Natural killer cell (primary cell): ENCODE measurements at regions of chr12 and their contacts with region 1.

Region 1: DNA sequence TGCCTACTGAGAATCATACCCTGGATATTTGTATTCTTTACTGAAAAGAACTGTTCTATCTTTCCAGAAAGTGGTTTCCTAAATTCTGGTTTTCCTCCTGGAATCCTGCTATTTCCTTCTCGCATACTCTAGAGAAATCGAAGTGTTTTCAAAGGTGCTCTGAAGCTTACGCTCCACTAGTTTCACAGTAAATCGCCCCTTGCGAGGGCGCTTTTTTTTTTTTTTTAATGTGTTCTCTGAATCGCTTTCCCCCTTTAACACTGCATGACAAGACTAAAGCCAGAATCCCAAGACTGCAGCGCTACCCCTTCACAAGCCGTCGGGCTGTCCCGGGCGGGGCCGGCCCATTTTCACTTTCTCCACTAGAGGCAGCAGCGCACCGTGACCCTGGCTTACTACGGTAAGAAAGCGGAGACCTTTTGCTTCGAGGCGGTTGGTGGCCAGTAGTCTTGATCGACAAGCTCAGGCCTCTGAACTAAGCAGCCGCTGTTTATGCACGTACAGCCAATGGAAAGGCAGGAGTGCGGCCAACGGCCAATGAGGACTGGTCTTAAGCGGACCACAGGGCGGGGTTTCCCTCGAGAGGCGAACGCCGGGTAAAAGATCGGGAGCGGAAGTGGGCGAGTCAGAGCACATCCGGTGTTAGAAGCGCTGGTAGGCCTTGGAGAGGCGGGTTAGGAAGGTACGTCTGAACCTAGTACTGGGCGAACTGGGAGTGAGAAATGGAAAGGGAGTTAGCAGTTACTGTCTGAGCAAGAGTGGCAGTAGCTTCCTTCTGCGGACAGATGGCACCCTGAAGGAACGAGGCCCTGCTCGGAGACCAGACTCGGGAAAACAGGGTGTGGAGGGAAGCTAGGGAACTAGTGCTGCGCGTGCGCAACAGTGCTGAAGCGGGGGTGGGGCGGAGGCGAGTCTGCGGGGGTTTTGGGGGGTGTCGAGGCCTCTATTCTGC is at the start of gene TMBIM6:
- DNase-seq: peak; percentile 97 to 100
- ATAC-seq: peak; percentile 82 to 95 (median 85)
- H3K4me3 ChIP-seq: peak within 1 kb of the TSS; percentile 57
- H3K4me3 Mint-ChIP-seq: peak within 1 kb of the TSS; percentile 96
- H3K27ac ChIP-seq: peak within 1 kb of the TSS; percentile 89
- H3K27ac Mint-ChIP-seq: peak within 1 kb of the TSS; percentile 98 to 100
- H3K4me1 ChIP-seq: peaks cover 27% of the 10 kb centered on the region
- H3K4me1 Mint-ChIP-seq: peaks cover 42 to 44% of the 10 kb centered on the region in 2 donors
- H3K27me3 ChIP-seq: no peaks in the 10 kb centered on the region
- H3K27me3 Mint-ChIP-seq: peaks cover 0 to 5% of the 10 kb centered on the region in 2 donors
- CTCF ChIP-seq: peak; percentile 87
- total RNA-seq, gene TMBIM6: 326 to 375 (median 366) TPM

Region 2: DNA sequence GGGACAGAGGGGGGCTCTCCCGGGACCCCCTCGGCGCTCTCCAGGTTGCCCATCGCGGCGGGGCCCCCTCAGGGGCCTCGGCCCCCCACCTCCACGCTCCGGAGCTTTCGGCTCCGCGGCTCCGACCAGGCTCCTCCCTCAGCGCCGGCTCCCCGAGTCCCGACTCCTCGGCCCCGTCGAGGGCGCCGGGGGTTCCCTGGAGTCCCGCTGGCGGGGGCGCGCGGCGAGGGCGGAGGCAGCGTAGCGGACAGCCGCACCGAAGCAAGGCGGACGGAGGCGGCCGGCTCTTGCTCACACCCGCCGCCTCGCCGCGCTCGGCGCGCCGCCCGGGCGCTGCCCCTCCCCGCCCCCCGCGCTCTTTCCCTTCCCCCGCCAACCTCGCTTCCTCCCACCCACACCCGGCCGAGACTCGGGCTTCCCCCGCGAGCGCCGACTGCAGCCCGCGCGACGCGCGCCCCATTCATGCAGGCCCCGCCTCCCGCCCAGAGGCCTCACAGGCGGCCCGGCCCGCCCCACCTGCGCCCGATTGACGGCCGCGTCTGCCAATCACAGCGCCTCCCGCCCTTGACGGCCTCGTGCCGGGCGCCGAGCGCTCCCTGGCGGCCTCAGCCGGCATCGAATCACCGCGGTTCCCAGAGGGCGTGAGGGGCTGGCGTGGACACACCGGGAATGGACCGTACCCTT is 33.9 kb before region 1 on chr12 and contains the start of gene FMNL3:
- intact Hi-C with region 1: loop called (anchors 1 kb)
- DNase-seq: peak; percentile 99
- ATAC-seq: peak; percentile 87 to 98 (median 91)
- H3K4me3 ChIP-seq: peak within 1 kb of the TSS; percentile 85
- H3K4me3 Mint-ChIP-seq: peak within 1 kb of the TSS; percentile 93
- H3K27ac ChIP-seq: peak within 1 kb of the TSS; percentile 90
- H3K27ac Mint-ChIP-seq: peak within 1 kb of the TSS; percentile 84 to 86
- H3K4me1 ChIP-seq: peaks cover 42% of the 10 kb centered on the region
- H3K4me1 Mint-ChIP-seq: peaks cover 42 to 47% of the 10 kb centered on the region in 2 donors
- H3K27me3 ChIP-seq: no peaks in the 10 kb centered on the region
- H3K27me3 Mint-ChIP-seq: peaks cover 5 to 21% of the 10 kb centered on the region in 2 donors
- CTCF ChIP-seq: peak; percentile 97
- total RNA-seq, gene FMNL3: 54.2 to 82.6 (median 58.7) TPM

Region 3: GRCh38 chr12:49776413-49776812 is 35.2 kb after region 1 on chr12:
- intact Hi-C with region 1: loop called (anchors 1 kb)
- DNase-seq: peak; percentile 35 to 74
- ATAC-seq: peak; percentile 65 to 83 (median 83)
- H3K4me3 ChIP-seq: no peak overlapping the region
- H3K4me3 Mint-ChIP-seq: no peak overlapping the region
- H3K27ac ChIP-seq: no peak overlapping the region
- H3K27ac Mint-ChIP-seq: no peak overlapping the region
- H3K4me1 ChIP-seq: peaks cover 14% of the 10 kb centered on the region
- H3K4me1 Mint-ChIP-seq: peaks cover 19 to 22% of the 10 kb centered on the region in 2 donors
- H3K27me3 ChIP-seq: no peaks in the 10 kb centered on the region
- H3K27me3 Mint-ChIP-seq: peaks cover 14 to 17% of the 10 kb centered on the region in 2 donors
- CTCF ChIP-seq: peak; percentile 44

Region 4: DNA sequence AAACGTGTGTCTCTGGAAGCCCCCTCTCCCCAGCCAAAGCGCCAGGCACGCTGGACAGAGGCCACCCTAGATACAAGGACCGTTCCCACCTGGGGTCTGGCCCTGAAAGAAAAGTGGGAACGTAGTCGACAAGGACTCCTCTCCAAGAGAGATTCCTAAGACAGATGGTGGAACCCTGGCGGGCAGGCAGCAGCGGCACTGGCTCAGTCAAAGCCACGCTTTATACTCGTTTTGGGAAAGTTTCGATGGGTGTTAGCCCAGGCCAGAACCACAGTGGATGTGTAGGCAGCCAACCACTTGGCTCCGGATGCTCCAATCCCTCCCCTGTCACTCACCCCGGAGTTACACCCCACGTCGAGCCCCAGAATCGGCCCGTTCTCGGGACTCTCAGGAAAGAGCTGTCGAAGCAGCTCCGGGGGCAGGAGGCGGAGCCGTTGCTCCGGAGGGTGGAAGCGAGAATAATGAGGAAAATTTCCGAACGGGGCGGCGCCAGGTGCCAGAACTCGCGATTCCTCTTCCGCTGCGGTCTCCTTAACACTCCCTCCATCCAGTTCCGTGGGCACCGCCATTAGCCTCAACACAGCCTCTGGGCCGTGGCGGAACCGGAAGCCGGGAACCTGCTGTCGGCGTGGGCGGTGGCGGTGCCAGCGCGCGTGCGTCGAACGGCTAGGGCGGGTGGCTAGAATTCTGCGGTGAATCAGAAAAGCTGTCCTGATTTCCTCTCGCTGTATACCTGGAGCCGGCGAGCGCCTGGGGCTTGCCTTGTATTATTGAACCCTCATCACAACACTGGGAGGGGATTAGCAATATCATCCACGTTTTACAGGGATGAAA is 101.5 kb after region 1 on chr12 and contains the start of gene BCDIN3D:
- intact Hi-C with region 1: loop called (anchors 1 kb)
- DNase-seq: peak; percentile 83 to 96
- ATAC-seq: peak; percentile 93 to 96 (median 95)
- H3K4me3 ChIP-seq: peak within 1 kb of the TSS; percentile 85
- H3K4me3 Mint-ChIP-seq: peak within 1 kb of the TSS; percentile 94
- H3K27ac ChIP-seq: peak within 1 kb of the TSS; percentile 78
- H3K27ac Mint-ChIP-seq: peak within 1 kb of the TSS; percentile 89 to 90
- H3K4me1 ChIP-seq: peaks cover 24% of the 10 kb centered on the region
- H3K4me1 Mint-ChIP-seq: peaks cover 33 to 36% of the 10 kb centered on the region in 2 donors
- H3K27me3 ChIP-seq: no peaks in the 10 kb centered on the region
- H3K27me3 Mint-ChIP-seq: peaks cover 0 to 1% of the 10 kb centered on the region in 2 donors
- CTCF ChIP-seq: no peak
- total RNA-seq, gene BCDIN3D: 4.0 to 6.0 (median 4.4) TPM

Region 5: GRCh38 chr12:49903695-49904423 is 162.7 kb after region 1 on chr12 and contains the start of gene FAIM2:
- intact Hi-C with region 1: no loop called
- DNase-seq: peak; percentile 30 to 61
- ATAC-seq: peak; percentile 40 to 84 (median 83)
- H3K4me3 ChIP-seq: peak within 1 kb of the TSS; percentile 7
- H3K4me3 Mint-ChIP-seq: peak within 1 kb of the TSS; percentile 91
- H3K27ac ChIP-seq: no peak within 1 kb of the TSS
- H3K27ac Mint-ChIP-seq: peak within 1 kb of the TSS; percentile 28 to 62
- H3K4me1 ChIP-seq: peaks cover 14% of the 10 kb centered on the region
- H3K4me1 Mint-ChIP-seq: peaks cover 8 to 18% of the 10 kb centered on the region in 2 donors
- H3K27me3 ChIP-seq: no peaks in the 10 kb centered on the region
- H3K27me3 Mint-ChIP-seq: peaks cover 0 to 20% of the 10 kb centered on the region in 2 donors
- CTCF ChIP-seq: no peak
- total RNA-seq, gene FAIM2: 0.09 to 0.57 TPM in 2 of 3 donors, not detected in the other